ENCODE measurements at regions of chr5 and their contacts with region 1.

Region 1: GRCh38 chr5:65742565-65743231 is 20.7 kb downstream of the NLN start:
- DNase-seq: peak; percentile 74
- H3K4me3 ChIP-seq: no peak overlapping the region
- H3K27ac ChIP-seq: peak overlapping the region; percentile 24
- H3K4me1 ChIP-seq: peaks cover 6% of the 10 kb centered on the region
- H3K27me3 ChIP-seq: no peaks in the 10 kb centered on the region
- CTCF ChIP-seq: peak; percentile 40 to 50
- POLR2A ChIP-seq: no peak

Region 2: DNA sequence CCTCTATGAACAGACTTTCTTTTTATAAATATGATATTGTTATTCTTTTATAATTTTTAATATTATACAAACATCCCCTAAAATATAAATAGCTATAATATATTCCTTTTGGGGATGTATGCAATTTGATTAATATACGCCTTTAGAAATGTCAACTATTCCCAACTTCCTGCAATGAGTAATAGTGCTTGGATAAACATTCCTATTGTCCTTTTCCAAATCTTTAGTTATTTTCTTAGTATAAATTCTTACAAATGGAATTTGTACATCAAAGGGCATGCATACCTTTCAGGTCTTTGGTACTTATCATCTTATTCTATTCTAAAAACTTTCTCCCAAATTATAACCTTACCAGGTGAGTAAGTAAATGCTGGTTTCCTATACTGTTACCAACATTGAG is 14.5 kb before region 1 on chr5:
- CTCF ChIA-PET with region 1: interaction called, 10 read pairs
- POLR2A ChIA-PET with region 1: no interaction called
- dilution Hi-C with region 1: no loop called
- intact Hi-C with region 1: no loop called
- DNase-seq: peak; percentile 54
- H3K4me3 ChIP-seq: no peak overlapping the region
- H3K27ac ChIP-seq: no peak overlapping the region
- H3K4me1 ChIP-seq: peaks cover 43% of the 10 kb centered on the region
- H3K27me3 ChIP-seq: no peaks in the 10 kb centered on the region
- CTCF ChIP-seq: no peak
- POLR2A ChIP-seq: no peak

Region 3: DNA sequence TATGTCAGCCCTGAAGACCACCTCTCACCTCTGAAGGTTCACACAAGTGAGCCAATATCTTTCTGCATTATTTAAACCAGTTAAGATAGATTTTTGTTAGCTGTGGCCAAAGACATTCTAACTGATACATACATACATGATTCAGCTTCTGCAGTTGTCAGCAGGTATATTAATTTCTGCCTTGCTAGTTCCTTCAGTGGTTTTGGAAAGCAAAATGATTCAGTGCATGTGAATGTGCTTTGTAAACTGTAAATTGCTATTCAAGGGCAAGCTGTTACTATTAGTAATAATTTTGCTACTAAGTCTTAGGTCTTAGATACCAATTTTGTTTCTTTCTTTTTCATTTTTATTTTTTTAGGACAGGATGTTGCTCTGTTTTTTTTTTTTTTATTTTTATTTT is 94.4 kb after region 1 on chr5:
- CTCF ChIA-PET with region 1: no interaction called
- POLR2A ChIA-PET with region 1: no interaction called
- dilution Hi-C with region 1: no loop called
- intact Hi-C with region 1: no loop called
- DNase-seq: no peak
- H3K4me3 ChIP-seq: no peak overlapping the region
- H3K27ac ChIP-seq: no peak overlapping the region
- H3K4me1 ChIP-seq: no peaks in the 10 kb centered on the region
- H3K27me3 ChIP-seq: no peaks in the 10 kb centered on the region
- CTCF ChIP-seq: no peak
- POLR2A ChIP-seq: no peak

Region 4: DNA sequence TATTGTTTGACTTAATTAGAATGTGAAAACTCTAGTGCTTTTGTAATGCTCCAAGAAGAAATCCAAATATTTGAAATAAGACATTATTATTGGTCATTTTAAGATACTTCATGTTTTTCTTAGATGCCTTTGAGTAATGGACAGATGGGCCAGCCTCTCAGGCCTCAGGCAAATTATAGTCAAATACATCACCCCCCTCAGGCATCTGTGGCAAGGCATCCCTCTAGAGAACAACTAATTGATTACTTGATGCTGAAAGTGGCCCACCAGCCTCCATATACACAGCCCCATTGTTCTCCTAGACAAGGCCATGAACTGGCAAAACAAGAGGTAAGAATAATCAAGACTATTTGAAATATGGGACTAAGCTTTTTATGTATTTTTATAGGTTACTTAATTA is 332.2 kb after region 1 on chr5:
- CTCF ChIA-PET with region 1: no interaction called
- POLR2A ChIA-PET with region 1: no interaction called
- dilution Hi-C with region 1: no loop called
- intact Hi-C with region 1: loop called (anchors 10 kb)
- DNase-seq: no peak
- H3K4me3 ChIP-seq: no peak overlapping the region
- H3K27ac ChIP-seq: no peak overlapping the region
- H3K4me1 ChIP-seq: no peaks in the 10 kb centered on the region
- H3K27me3 ChIP-seq: no peaks in the 10 kb centered on the region
- CTCF ChIP-seq: no peak
- POLR2A ChIP-seq: no peak

Region 5: DNA sequence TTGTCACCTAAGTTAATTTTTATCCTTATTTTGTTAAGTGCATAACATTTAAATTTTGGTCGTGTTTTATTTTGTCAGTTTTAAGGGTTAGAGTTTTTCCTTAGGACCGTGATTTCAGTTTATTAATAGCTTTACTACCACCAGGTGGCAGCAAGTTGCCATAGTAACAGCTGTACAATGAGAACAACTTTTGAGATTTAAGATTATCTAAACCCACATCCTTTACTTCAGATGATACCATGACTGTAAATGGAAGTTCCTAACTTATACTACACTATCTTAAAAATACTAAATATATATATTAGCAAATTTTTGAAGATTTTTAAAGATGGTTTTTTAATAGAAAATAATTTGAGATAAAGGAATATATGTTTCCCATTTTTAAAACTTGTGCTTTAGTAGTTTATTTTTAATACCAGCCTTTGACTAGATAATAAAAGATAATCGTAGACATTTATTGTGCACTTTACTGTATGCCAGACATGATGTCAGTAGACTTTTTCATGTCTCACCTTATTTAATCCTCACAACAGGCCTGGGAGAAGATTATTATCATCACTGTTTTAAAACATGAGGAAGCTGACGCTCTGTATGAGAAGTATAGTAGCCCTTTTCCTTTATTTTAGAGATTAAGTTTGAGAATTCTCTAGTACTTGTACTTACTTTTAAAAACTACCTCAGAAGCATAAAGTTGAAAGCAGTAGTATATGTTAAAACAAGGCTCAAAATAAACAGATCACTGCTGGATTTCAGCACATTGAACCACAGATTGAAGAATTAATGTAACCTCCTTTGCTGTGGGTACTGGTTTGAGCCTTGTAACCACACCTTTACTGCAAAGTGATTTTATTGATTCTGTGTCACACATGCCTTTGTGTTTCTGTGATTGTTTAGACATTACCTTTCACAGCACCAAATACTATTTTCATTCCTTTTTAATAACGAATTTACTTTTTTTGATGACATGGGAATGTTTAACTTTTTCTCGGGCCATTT is 428.9 kb after region 1 on chr5:
- CTCF ChIA-PET with region 1: no interaction called
- POLR2A ChIA-PET with region 1: no interaction called
- dilution Hi-C with region 1: no loop called
- intact Hi-C with region 1: loop called (anchors 5 kb)
- DNase-seq: peak; percentile 59
- H3K4me3 ChIP-seq: no peak overlapping the region
- H3K27ac ChIP-seq: no peak overlapping the region
- H3K4me1 ChIP-seq: no peaks in the 10 kb centered on the region
- H3K27me3 ChIP-seq: no peaks in the 10 kb centered on the region
- CTCF ChIP-seq: peak in 1 of 2 donors; percentile 35
- POLR2A ChIP-seq: no peak

Region 6: DNA sequence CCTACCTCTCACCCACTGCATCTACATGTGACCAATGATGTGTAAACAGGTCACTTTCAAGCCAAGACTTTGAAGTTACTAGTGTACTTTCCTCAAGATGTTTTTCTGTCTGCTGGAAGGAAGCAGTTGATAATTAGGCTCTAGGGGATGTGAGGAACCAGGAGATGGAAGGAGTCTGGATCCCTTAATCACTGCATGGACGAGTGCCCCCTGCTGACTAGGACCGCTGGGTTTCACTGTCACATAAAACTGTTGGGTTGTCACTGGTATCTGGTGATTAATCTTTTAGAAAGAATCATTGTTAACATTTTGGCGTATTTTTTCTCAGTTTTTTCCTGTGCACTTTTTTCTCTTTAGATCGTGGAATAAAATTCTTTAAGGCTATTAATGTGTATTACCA is 480.9 kb after region 1 on chr5:
- CTCF ChIA-PET with region 1: no interaction called
- POLR2A ChIA-PET with region 1: no interaction called
- dilution Hi-C with region 1: no loop called
- intact Hi-C with region 1: loop called (anchors 1 kb)
- DNase-seq: peak; percentile 37
- H3K4me3 ChIP-seq: no peak overlapping the region
- H3K27ac ChIP-seq: no peak overlapping the region
- H3K4me1 ChIP-seq: no peaks in the 10 kb centered on the region
- H3K27me3 ChIP-seq: peaks cover 0 to 4% of the 10 kb centered on the region in 2 experiments
- CTCF ChIP-seq: peak; percentile 41 to 44
- POLR2A ChIP-seq: no peak

Measured in endothelial cell of umbilical vein (primary cell).